ENCODE measurements at regions of chr9 and their contacts with region 1.

Region 1: GRCh38 chr9:35945341-35946018 is 12.5 kb downstream of the OR2S2 start:
- DNase-seq: peak; percentile 78
- ATAC-seq: peak; percentile 60
- H3K4me3 Mint-ChIP-seq: no peak overlapping the region
- H3K27ac Mint-ChIP-seq: no peak overlapping the region
- H3K4me1 Mint-ChIP-seq: peaks cover 15% of the 10 kb centered on the region
- H3K27me3 Mint-ChIP-seq: peaks cover 3% of the 10 kb centered on the region

Region 2: GRCh38 chr9:35896570-35896969 is 48.9 kb before region 1 on chr9:
- CTCF ChIA-PET with region 1: interaction called, 59 read pairs
- POLR2A ChIA-PET with region 1: no interaction called
- DNase-seq: no peak
- ATAC-seq: no peak
- H3K4me3 Mint-ChIP-seq: no peak overlapping the region
- H3K27ac Mint-ChIP-seq: no peak overlapping the region
- H3K4me1 Mint-ChIP-seq: no peaks in the 10 kb centered on the region
- H3K27me3 Mint-ChIP-seq: peaks cover 40% of the 10 kb centered on the region

Region 3: DNA sequence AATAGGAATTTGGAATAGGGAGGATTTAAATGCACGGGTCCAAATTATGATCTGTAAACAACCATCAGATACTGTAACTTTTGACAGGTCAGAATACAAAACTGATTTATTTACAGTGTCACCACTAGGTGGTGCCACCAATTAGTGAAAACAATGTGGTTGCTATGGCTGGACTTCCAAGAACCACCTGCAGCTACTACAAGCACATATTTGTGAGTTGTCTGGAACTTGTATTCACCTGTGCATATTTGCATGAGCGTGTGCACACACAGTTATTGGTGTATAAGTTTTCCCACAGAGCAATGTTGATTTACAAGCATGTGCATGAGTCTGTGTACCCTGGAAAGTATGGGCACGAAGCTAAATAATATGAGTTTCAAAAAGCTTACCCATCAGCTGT is 42.4 kb before region 1 on chr9:
- CTCF ChIA-PET with region 1: interaction called, 59 read pairs
- POLR2A ChIA-PET with region 1: no interaction called
- DNase-seq: peak; percentile 64
- ATAC-seq: peak; percentile 74
- H3K4me3 Mint-ChIP-seq: no peak overlapping the region
- H3K27ac Mint-ChIP-seq: no peak overlapping the region
- H3K4me1 Mint-ChIP-seq: peaks cover 10% of the 10 kb centered on the region
- H3K27me3 Mint-ChIP-seq: peaks cover 10% of the 10 kb centered on the region

Region 4: DNA sequence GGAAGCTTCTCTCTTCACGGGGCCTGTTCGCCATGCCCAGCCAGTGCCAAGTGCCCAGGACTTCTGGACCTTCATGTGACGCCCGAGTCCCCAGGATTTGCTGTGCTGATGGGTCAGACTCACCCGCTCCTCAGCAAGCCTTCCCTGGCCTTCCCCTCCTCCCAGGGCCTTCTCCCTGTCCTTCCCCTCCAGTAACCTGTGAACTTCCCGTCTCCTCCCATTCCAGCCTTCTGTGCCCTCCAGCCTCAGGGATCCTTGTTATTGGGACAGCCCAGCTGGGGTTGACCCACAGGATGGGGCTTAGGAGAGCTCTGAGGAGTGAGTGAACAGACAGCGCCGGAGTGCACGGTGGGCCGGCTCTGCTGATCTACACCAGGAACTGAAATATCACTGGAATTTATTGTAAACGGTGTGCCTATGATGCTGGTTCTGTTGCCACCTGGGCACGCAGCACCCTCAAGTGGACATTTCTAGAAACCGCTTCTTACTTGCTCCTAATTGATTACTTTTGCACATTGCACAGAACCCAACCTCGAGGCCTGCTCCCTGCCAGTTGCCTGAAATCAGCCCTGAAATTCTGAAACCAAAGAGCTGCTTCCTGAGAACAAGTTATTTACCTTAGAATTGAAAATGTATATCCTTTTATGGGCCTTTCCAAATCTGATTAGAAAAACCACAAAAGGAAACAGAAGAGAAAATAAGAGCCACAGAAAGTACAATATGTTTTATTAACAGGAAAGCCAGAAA is 34.7 kb before region 1 on chr9:
- CTCF ChIA-PET with region 1: interaction called, 20 read pairs
- POLR2A ChIA-PET with region 1: no interaction called
- DNase-seq: peak; percentile 64
- ATAC-seq: peak; percentile 63
- H3K4me3 Mint-ChIP-seq: peak overlapping the region; percentile 20
- H3K27ac Mint-ChIP-seq: peak overlapping the region; percentile 92
- H3K4me1 Mint-ChIP-seq: peaks cover 42% of the 10 kb centered on the region
- H3K27me3 Mint-ChIP-seq: no peaks in the 10 kb centered on the region

Region 5: GRCh38 chr9:35960039-35960655 is 14.7 kb after region 1 on chr9:
- CTCF ChIA-PET with region 1: interaction called, 28 read pairs
- POLR2A ChIA-PET with region 1: no interaction called
- DNase-seq: no peak
- ATAC-seq: no peak
- H3K4me3 Mint-ChIP-seq: no peak overlapping the region
- H3K27ac Mint-ChIP-seq: no peak overlapping the region
- H3K4me1 Mint-ChIP-seq: no peaks in the 10 kb centered on the region
- H3K27me3 Mint-ChIP-seq: peaks cover 19% of the 10 kb centered on the region

Measured in activated CD8-positive, alpha-beta T cell treated with anti-CD3 and anti-CD28 coated beads, Interleukin-2, amount 10 ng/mL, durations not matched to agents 7 days and 5 days (primary cell).